ENCODE measurements at regions of chr2 and their contacts with region 1.

Region 1: GRCh38 chr2:148644883-148645538 is 460 bp downstream of the EPC2 start:
- DNase-seq: peak; percentile 95
- H3K4me3 ChIP-seq: peak overlapping the region; percentile 83 to 85 (median 83)
- H3K27ac ChIP-seq: peak overlapping the region; percentile 84
- H3K4me1 ChIP-seq: peaks cover 25% of the 10 kb centered on the region
- H3K27me3 ChIP-seq: no peaks in the 10 kb centered on the region
- CTCF ChIP-seq: peak; percentile 14 to 47
- POLR2A ChIP-seq: peak; percentile 87

Region 2: DNA sequence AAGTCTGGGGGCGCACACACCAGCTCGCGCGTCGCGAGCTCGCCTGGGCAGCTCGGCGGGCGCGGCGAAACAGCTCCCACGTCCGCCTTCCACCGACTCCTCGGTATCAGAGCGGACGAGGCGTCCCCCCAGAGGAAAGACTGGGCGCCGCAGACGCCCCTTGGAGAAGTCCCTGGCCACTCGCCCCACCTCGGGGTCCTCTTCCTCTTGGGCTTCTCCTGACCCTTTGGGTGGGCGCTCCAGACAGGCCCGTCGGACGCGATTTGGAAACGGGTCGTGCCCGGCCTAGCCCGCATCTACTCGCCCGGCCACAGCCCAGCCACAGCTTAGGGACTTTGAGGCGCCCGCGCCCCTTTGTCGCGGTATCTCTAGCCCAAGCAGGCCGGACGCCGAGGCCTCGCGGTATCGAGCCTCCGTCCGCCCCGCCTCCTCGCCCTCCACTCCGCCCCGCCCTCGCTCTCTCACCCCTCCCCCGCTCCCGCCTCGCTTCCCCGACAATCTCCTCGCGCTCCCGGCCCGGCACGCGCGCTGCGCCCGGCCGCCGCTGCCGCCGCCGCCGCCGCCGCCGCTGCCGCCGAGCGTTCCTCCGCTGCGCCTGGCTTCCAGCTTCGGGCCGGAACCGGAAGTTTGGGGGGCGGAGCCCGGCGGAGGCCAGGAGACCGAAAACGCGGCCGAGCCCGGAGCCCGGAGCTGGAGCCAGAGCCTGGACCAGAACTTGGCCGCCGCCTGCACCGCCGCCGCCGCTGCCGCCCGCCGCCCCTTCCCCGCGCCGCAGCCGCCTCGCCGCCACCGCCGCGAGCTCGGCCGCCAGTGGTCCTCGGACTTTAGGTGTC is 800.9 kb before region 1 on chr2:
- CTCF ChIA-PET with region 1: no interaction called
- POLR2A ChIA-PET with region 1: no interaction called
- dilution Hi-C with region 1: no loop called
- intact Hi-C with region 1: loop called (anchors 10 kb)
- DNase-seq: peak; percentile 85
- H3K4me3 ChIP-seq: peak overlapping the region; percentile 60 to 95 (median 85)
- H3K27ac ChIP-seq: peak overlapping the region; percentile 70
- H3K4me1 ChIP-seq: peaks cover 20% of the 10 kb centered on the region
- H3K27me3 ChIP-seq: peaks cover 0 to 2% of the 10 kb centered on the region in 2 experiments
- CTCF ChIP-seq: peak in 1 of 2 donors; percentile 23
- POLR2A ChIP-seq: no peak

Region 3: GRCh38 chr2:147989809-147990403 is 655.1 kb before region 1 on chr2:
- CTCF ChIA-PET with region 1: interaction called, 3 read pairs
- POLR2A ChIA-PET with region 1: no interaction called
- dilution Hi-C with region 1: no loop called
- intact Hi-C with region 1: loop called (anchors 5 kb)
- DNase-seq: peak; percentile 66
- H3K4me3 ChIP-seq: no peak overlapping the region
- H3K27ac ChIP-seq: no peak overlapping the region
- H3K4me1 ChIP-seq: no peaks in the 10 kb centered on the region
- H3K27me3 ChIP-seq: no peaks in the 10 kb centered on the region
- CTCF ChIP-seq: peak; percentile 32 to 44
- POLR2A ChIP-seq: no peak

Region 4: DNA sequence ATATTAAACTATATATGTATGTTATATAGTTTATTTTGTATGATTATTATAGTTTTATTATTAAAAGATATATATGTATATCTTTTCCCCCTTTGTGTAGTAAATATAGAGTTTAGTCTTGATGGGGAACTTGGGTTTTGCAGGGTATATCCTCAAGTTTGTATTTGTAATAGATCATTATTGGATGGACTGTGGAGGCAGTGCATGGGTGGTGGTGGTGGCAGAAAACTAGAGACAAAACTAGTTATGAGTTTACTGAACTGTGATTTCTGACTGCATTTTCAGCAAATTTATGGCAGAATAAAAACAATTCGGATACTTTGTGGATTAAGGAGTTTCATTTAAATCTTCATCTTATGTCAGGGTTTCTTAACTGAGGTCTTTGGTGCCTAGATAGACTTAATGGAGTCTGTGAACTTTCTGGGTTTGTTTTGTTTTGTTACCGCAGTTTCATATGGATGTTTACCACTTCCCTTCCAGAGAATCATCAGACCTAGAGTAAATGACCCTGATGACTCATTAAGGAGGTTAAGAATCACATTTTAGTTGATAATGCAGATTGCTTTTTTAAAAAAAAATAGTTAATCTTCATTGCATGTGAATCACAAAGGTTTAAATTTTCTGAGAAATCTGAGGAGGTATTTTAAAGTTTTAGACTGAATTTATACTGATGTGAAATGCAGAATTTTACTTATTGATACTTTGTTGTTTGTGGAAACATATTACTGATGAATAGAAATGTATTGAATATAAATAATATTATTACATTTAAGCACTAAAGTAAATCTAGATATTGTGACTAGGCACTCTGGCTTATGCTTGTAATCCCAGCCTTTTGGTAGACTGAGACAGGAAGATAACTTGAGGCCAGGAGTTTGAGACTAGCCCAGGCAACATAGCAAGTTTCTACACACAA is 14.1 kb after region 1 on chr2:
- CTCF ChIA-PET with region 1: interaction called, 3 read pairs
- POLR2A ChIA-PET with region 1: no interaction called
- dilution Hi-C with region 1: no loop called
- intact Hi-C with region 1: loop called (anchors 1 kb)
- DNase-seq: peak; percentile 75
- H3K4me3 ChIP-seq: no peak overlapping the region
- H3K27ac ChIP-seq: no peak overlapping the region
- H3K4me1 ChIP-seq: peaks cover 24% of the 10 kb centered on the region
- H3K27me3 ChIP-seq: no peaks in the 10 kb centered on the region
- CTCF ChIP-seq: no peak
- POLR2A ChIP-seq: no peak

Region 5: GRCh38 chr2:148853458-148853857 is 208.4 kb after region 1 on chr2:
- CTCF ChIA-PET with region 1: no interaction called
- POLR2A ChIA-PET with region 1: no interaction called
- dilution Hi-C with region 1: no loop called
- intact Hi-C with region 1: no loop called
- DNase-seq: no peak
- H3K4me3 ChIP-seq: no peak overlapping the region
- H3K27ac ChIP-seq: no peak overlapping the region
- H3K4me1 ChIP-seq: no peaks in the 10 kb centered on the region
- H3K27me3 ChIP-seq: peaks cover 0 to 2% of the 10 kb centered on the region in 2 experiments
- CTCF ChIP-seq: no peak
- POLR2A ChIP-seq: no peak

Region 6: GRCh38 chr2:148874868-148875341 is 229.9 kb after region 1 on chr2 and contains the start of gene KIF5C:
- CTCF ChIA-PET with region 1: no interaction called
- POLR2A ChIA-PET with region 1: no interaction called
- dilution Hi-C with region 1: no loop called
- intact Hi-C with region 1: loop called (anchors 2 kb)
- DNase-seq: peak; percentile 29
- H3K4me3 ChIP-seq: no peak within 1 kb of the TSS
- H3K27ac ChIP-seq: no peak within 1 kb of the TSS
- H3K4me1 ChIP-seq: no peaks in the 10 kb centered on the region
- H3K27me3 ChIP-seq: peaks cover 27 to 39% of the 10 kb centered on the region in 2 experiments
- CTCF ChIP-seq: no peak
- POLR2A ChIP-seq: no peak
- total RNA-seq, gene KIF5C: 0.21 and 0.55 TPM in 2 replicates

Region 7: GRCh38 chr2:149430743-149431737 is 786.0 kb after region 1 on chr2:
- CTCF ChIA-PET with region 1: no interaction called
- POLR2A ChIA-PET with region 1: interaction called, 14 read pairs
- dilution Hi-C with region 1: no loop called
- intact Hi-C with region 1: no loop called
- DNase-seq: peak; percentile 13
- H3K4me3 ChIP-seq: no peak overlapping the region
- H3K27ac ChIP-seq: no peak overlapping the region
- H3K4me1 ChIP-seq: no peaks in the 10 kb centered on the region
- H3K27me3 ChIP-seq: no peaks in the 10 kb centered on the region
- CTCF ChIP-seq: no peak
- POLR2A ChIP-seq: no peak